GM10248 (cell line): ENCODE measurements at regions of chr12 and their contacts with region 1.

Region 1: DNA sequence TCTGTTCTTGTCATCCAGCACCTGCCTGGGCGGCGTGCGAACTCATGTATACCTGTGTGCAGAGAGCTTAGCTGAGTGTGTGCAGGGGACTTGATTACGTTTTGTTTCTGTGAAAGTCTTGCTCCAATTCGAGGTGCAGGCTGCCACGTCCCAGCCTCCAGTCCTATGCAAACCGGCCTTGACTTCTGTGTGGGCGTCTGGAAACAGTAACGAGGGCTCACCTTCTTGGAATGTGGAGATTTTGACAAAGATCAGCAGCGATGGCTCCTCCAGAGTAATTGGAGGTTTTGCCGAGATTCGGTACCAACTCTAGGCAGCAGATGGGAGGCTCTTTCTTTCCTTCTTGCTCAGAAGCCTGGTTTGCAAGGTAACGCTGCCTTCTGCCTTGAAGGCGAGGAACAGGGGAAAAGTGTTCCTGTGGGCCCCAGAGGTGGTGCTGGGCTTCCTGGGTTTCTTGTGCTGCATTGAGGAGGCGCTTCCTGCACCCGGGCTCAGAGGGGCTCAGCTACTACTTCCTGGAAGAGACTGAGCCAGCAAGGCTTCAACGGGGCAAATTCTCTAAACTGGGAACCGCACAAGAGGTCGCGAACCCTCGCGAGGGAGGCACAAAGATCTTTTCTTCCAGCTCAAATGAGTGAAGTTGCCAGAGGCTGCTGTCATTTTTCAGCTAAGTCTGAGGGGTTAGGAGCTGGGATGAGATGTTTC is 249.0 kb downstream of the AACS start:
- DNase-seq: no peak
- CTCF ChIP-seq: no peak

Region 2: GRCh38 chr12:125330645-125331341 is 16.6 kb after region 1 on chr12:
- CTCF ChIA-PET with region 1: interaction called, 27 read pairs
- POLR2A ChIA-PET with region 1: no interaction called
- DNase-seq: peak; percentile 88
- CTCF ChIP-seq: peak; percentile 92

Region 3: DNA sequence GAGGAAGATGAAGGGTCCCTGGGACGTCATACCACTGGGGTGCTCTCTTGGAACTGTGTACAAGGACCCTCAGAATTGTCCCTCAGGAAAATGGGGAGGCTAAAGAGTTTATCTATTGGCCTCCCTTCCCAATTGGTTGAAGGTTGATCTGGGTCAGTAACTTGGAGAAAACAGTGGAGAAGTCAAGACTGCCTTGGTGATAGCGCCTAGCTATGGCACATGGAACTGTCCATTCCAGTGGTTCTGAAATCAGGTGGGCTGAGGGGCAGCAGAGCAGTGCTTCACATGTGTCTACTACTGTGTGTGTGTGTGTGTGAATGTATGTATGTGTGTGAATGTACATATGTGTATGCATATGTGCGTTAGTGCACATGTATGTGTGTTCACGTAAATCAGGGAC is 67.2 kb after region 1 on chr12:
- CTCF ChIA-PET with region 1: no interaction called
- POLR2A ChIA-PET with region 1: no interaction called
- DNase-seq: no peak
- CTCF ChIP-seq: no peak